CD4-positive, alpha-beta T cell (primary cell): ENCODE measurements at regions of chr19 and their contacts with region 1.

Region 1: GRCh38 chr19:32345261-32346207 is at the start of gene ZNF507:
- DNase-seq: peak; percentile 64 to 88 (median 75)
- ATAC-seq: peak; percentile 84
- H3K4me3 ChIP-seq: peak within 1 kb of the TSS; percentile 92
- H3K4me3 Mint-ChIP-seq: peak within 1 kb of the TSS; percentile 96
- H3K27ac ChIP-seq: peak within 1 kb of the TSS; percentile 58 to 82
- H3K27ac Mint-ChIP-seq: peak within 1 kb of the TSS; percentile 87
- H3K4me1 ChIP-seq: peaks cover 13% of the 10 kb centered on the region
- H3K4me1 Mint-ChIP-seq: peaks cover 50% of the 10 kb centered on the region
- H3K27me3 ChIP-seq: no peaks in the 10 kb centered on the region
- H3K27me3 Mint-ChIP-seq: peaks cover 5% of the 10 kb centered on the region
- CTCF ChIP-seq: no peak
- total RNA-seq, gene ZNF507: 30.4 to 31.3 TPM

Region 2: DNA sequence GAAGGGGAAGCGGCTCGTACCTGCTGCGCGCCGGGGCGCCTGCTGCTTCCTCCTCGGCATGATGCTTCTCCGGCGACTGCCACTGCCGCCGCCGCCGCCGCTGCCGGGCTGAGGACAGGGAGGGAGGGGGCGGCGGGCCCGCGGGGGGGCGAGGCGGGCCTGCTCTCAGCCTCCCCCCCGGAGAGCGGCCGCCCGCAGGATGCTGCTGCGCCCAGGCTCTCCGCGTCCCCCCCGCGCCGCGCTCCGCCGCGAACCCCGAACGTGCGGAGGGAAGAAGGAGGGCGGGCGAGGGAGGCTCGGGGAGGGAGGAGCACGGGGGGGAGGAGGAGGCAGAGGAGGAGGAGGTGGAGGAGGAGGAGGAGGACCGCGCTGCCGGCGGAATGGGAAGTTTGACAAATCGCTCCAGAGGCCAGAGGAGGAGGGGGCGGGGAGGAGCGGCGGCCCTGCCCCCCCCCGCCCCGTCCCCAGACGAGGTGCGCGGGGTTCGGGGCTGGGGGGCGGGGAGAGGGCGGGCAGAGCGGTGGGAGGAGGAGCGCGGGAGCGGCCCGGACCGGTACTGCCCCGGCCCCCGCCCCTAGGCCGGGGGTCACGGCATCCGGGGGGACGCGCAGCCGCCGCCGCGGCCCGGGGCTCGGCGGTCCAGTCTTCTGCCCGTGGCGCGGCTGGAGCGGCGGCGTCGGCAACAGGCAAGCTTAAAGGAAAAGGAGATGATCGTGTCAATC is 996.2 kb before region 1 on chr19 and contains the start of gene TSHZ3:
- CTCF ChIA-PET with region 1: no interaction called
- POLR2A ChIA-PET with region 1: no interaction called
- intact Hi-C with region 1: loop called in 1 of 2 experiments (anchors 10 kb)
- DNase-seq: peak in 9 of 14 experiments; percentile 13 to 72 (median 43)
- ATAC-seq: peak; percentile 50
- H3K4me3 ChIP-seq: peak within 1 kb of the TSS; percentile 63
- H3K4me3 Mint-ChIP-seq: peak within 1 kb of the TSS; percentile 90
- H3K27ac ChIP-seq: no peak within 1 kb of the TSS
- H3K27ac Mint-ChIP-seq: no peak within 1 kb of the TSS
- H3K4me1 ChIP-seq: peaks cover 50% of the 10 kb centered on the region
- H3K4me1 Mint-ChIP-seq: peaks cover 41% of the 10 kb centered on the region
- H3K27me3 ChIP-seq: peaks cover 67 to 82% of the 10 kb centered on the region in 2 experiments
- H3K27me3 Mint-ChIP-seq: peaks cover 74% of the 10 kb centered on the region
- CTCF ChIP-seq: no peak
- total RNA-seq, gene TSHZ3: 0.38 to 0.61 TPM

Region 3: DNA sequence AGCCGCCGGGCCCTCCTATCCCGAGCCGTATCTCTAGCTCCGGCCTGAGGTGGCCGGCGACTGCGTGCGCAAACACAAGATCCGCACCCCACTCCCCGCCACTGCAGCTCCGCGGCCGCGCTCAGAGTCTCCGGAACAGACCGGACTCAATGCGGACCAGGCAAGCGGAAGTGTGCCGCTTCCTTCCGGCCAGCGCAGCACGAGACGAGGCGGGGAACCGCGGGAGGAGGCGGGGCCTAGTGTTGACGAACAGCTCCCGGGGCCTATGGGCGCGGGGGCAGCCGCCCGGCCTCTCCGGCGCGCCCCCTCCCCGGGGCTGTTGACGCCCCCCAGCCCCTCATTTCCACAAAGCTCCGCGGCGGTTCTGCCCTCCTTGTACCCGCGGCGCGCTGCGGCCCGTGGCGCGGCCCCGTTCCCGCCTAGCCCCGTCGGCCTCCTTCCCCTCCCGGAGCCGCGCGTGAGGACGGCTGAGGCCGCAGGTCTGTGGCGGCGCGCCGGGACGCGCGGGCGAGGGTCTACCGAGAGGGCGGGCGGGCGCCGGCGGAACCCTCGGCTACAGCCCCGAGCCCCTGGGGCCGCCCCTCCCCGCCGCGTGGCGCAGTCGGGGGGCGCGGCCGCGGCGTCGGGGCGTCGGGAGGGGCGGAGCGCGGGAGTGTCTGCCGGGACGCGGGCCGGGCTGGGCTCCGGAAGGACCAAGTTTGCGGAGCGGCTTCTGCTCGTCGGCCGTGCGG is 60.1 kb after region 1 on chr19 and contains the start of gene DPY19L3:
- CTCF ChIA-PET with region 1: no interaction called
- POLR2A ChIA-PET with region 1: interaction called, 24 read pairs
- intact Hi-C with region 1: loop called (anchors 2 to 10 kb)
- DNase-seq: peak; percentile 77 to 93 (median 85)
- ATAC-seq: peak; percentile 88
- H3K4me3 ChIP-seq: peak within 1 kb of the TSS; percentile 76
- H3K4me3 Mint-ChIP-seq: peak within 1 kb of the TSS; percentile 89
- H3K27ac ChIP-seq: peak within 1 kb of the TSS; percentile 72 to 80
- H3K27ac Mint-ChIP-seq: peak within 1 kb of the TSS; percentile 91
- H3K4me1 ChIP-seq: peaks cover 19% of the 10 kb centered on the region
- H3K4me1 Mint-ChIP-seq: peaks cover 30% of the 10 kb centered on the region
- H3K27me3 ChIP-seq: no peaks in the 10 kb centered on the region
- H3K27me3 Mint-ChIP-seq: no peaks in the 10 kb centered on the region
- CTCF ChIP-seq: no peak
- total RNA-seq, gene DPY19L3: 7.3 to 8.5 TPM

Region 4: DNA sequence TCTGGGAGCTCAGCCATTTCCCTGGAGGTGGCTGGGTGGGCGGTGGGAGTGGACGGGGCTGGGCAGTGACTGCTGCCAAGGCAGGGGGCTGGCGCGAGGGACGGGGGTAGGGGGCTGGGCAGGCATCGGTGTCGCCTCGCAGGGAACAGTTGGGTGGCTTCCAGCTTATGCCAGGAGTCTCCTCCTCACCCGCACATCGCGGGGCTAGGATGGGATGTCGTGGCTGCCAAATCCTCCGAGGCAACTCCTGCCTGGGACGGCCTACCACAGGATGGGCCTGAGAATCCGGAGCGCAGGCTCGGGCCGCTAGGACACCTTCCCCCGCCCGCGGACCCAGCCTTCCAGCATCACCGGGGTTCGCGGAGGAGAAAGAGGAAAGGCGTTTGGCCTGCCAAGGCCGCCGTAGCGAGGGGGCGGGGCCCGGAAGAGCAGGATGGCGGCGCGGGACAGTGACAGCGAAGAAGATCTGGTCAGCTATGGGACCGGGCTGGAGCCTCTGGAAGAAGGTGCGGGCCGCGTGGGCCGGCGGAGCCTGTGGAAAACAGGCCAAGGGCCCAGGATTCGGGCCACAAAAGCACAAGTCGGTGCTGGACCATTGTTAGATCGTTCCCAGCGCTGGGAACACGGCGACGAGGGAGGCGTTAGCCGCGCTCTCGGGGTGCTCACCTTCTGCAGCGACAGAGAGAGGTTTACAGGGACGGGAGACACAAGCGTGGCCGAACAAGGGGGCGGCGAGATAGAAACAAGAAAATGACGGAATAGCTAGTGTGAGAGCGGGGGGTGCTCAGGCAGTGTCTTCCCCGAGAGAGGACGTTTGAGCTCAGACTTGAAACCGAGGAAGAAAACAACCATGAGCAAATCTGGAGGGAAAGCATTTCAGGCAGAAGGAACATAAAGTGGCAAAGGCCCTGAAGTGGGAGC is 735.5 kb after region 1 on chr19 and contains the start of gene GPATCH1:
- CTCF ChIA-PET with region 1: no interaction called
- POLR2A ChIA-PET with region 1: no interaction called
- intact Hi-C with region 1: loop called in 1 of 2 experiments (anchors 10 kb)
- DNase-seq: peak; percentile 70 to 90 (median 80)
- ATAC-seq: peak; percentile 94
- H3K4me3 ChIP-seq: peak within 1 kb of the TSS; percentile 86
- H3K4me3 Mint-ChIP-seq: peak within 1 kb of the TSS; percentile 97
- H3K27ac ChIP-seq: peak within 1 kb of the TSS; percentile 59 to 71
- H3K27ac Mint-ChIP-seq: peak within 1 kb of the TSS; percentile 89
- H3K4me1 ChIP-seq: peaks cover 22% of the 10 kb centered on the region
- H3K4me1 Mint-ChIP-seq: peaks cover 23% of the 10 kb centered on the region
- H3K27me3 ChIP-seq: no peaks in the 10 kb centered on the region
- H3K27me3 Mint-ChIP-seq: no peaks in the 10 kb centered on the region
- CTCF ChIP-seq: no peak
- total RNA-seq, gene GPATCH1: 4.6 to 5.5 TPM